ENCODE measurements at regions of chr5 and their contacts with region 1.

Region 1: DNA sequence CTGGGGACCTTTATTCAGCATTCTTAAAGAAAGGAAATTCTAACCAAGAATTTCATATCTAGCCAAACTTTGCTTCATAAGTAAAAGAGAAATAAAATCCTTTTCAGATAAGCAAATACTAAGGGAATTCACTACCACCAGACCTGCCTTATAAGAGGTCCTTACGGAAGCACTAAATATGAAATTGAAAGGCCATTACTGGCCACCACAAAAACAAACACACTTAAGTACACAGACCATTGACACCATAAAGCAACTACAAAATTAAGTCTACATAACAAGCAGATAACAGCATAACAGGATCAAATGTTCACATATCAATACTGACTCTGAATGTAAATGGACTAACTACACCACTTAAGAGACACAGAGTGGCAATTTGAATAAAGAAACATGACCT is 361.4 kb upstream of the POU5F2 start:
- DNase-seq: no peak
- ATAC-seq: no peak
- H3K4me3 ChIP-seq: no peak overlapping the region
- H3K27ac ChIP-seq: no peak overlapping the region
- H3K4me1 ChIP-seq: no peaks in the 10 kb centered on the region
- H3K27me3 ChIP-seq: no peaks in the 10 kb centered on the region
- CTCF ChIP-seq: no peak
- POLR2A ChIP-seq: no peak

Region 2: DNA sequence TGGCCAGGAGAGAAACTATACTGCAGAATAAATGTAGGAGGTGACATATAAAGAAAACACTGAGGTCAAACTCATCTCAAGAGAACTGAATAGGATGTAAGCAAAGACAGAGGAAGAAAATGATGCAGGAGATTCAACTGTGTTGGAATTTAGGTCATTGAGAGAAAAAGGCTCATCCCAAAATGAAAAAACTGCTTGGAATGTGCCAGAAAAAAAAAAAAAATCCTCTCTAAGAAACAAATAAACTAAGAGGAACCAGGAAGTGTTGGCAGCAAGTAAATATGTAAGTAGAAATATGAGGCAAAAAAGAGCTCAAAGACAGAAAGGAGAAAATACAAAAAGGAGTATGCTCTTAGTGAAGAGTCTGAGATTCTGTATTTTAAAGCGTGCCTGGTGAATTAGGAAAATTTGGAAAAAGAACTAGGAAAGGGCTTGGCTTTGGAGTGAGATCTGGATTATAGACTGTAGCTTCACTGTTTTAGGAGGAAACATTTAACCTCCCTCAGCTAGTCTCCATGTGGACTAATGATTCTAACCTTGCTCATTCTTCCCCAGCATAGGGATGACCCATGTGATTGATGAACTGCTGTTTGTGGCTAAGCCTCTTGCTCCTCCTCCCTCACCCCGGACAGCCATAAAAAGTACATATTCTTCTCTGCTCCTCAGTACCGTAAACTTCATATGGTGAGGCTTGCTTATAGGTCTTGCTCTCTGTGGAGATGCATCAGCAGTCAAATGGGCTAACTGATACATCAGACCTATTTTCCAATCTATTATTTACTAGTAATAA is 175.8 kb before region 1 on chr5:
- intact Hi-C with region 1: loop called in 1 of 10 experiments (anchors 10 kb)
- DNase-seq: no peak
- ATAC-seq: no peak
- H3K4me3 ChIP-seq: no peak overlapping the region
- H3K27ac ChIP-seq: no peak overlapping the region
- H3K4me1 ChIP-seq: peaks cover 0 to 3% (median 0%) of the 10 kb centered on the region in 12 donors
- H3K27me3 ChIP-seq: no peaks in the 10 kb centered on the region
- CTCF ChIP-seq: no peak
- POLR2A ChIP-seq: no peak

Measured in heart left ventricle (tissue), 16 donors.